ENCODE measurements at regions of chr1 and their contacts with region 1.

Region 1: DNA sequence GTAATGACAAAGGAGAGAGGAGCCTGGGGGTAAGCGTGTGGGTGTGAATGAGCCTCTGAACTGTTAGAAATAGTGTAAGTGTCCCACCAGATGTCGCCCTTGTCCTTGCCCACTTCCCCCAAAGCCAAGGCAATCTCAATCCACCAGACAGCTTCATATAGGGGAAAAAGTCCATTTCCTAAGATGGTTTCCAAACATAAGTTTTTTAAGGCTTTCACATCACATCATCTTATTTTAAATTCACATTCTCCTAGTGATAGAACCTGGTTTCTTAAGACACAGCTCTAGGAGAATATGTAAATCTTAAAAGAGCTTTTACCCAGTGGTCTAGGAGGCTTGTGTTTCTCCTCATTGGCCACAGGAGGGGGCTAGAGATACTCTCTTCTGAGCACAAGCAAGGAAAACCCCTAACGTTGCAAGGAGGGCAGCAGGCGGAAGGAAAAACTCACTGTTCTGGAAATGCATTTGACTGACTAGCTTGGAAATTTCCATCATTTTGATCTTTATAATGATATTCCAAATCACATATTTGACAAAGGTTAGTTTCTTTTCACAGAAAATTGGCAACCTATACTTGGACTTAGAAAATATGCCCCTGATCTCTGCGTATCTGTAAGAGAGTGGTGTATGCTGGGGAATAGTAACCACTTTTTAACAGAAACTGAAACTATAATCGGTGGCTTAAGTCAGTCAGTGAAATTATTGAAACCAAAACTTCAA is 51.9 kb upstream of the LPAR3 start:
- DNase-seq: peak; percentile 90
- H3K4me3 ChIP-seq: peak overlapping the region; percentile 37
- H3K27ac ChIP-seq: no peak overlapping the region
- H3K27me3 ChIP-seq: peaks cover 8% of the 10 kb centered on the region
- CTCF ChIP-seq: peak; percentile 77

Region 2: DNA sequence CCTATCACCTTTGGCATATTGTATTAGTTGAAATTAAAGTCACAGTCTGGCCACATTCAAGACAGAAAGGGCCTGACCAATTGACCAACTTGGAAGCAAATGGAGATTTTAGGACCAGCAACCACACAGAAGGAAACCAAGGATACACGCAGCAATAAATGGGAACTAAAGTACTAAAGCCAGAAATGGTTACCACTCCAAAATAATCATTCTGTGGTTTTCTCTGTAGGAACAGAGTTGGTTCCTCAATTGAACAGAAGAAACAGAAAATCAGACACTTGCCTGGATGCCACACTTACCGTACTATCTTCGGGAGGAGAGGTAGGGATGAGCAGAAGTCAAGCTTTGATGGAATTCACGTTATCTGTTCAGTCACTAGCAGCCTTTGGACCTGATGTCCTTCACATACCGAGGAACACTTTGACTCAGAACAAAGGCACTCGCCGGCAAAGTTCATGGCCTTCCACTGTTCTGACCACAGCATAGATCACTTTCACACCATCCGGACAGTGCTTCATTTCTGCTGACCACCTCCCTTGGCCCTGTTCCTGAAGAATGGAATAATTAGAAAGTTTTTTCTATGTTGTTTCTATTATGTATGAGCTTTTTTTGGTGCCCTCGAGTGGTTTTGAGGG is 148.8 kb before region 1 on chr1:
- CTCF ChIA-PET with region 1: no interaction called
- POLR2A ChIA-PET with region 1: no interaction called
- DNase-seq: no peak
- H3K4me3 ChIP-seq: no peak overlapping the region
- H3K27ac ChIP-seq: no peak overlapping the region
- H3K27me3 ChIP-seq: peaks cover 7% of the 10 kb centered on the region
- CTCF ChIP-seq: no peak

Region 3: GRCh38 chr1:84892705-84893618 is 52.0 kb before region 1 on chr1 and contains the start of gene LPAR3:
- CTCF ChIA-PET with region 1: no interaction called
- POLR2A ChIA-PET with region 1: no interaction called
- DNase-seq: no peak
- H3K4me3 ChIP-seq: peak within 1 kb of the TSS; percentile 56
- H3K27ac ChIP-seq: no peak within 1 kb of the TSS
- H3K27me3 ChIP-seq: peaks cover 14% of the 10 kb centered on the region
- CTCF ChIP-seq: no peak
- polyA plus RNA-seq, gene LPAR3: 3.5 and 4.8 TPM in 2 replicates

Region 4: DNA sequence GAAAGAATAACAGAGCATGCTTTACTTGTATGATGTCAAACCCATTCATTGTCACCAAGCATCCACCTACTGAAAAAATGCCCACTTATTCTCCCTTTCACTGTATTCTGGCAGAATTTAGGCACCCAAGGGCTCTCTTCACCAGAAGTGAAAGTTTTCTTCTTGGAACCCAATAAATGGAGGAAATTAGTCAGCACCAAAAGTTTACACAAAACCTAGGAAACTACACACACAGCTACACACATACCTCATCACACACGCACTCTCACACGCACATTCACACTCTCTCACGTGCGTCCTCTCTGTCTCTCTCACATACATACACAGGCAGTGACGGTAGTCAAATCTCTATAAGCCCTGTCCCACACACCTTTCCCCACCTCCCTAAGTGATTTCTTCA is 14.4 kb after region 1 on chr1:
- CTCF ChIA-PET with region 1: interaction called, 67 read pairs
- POLR2A ChIA-PET with region 1: no interaction called
- DNase-seq: no peak
- H3K4me3 ChIP-seq: no peak overlapping the region
- H3K27ac ChIP-seq: no peak overlapping the region
- H3K27me3 ChIP-seq: no peaks in the 10 kb centered on the region
- CTCF ChIP-seq: no peak

Region 5: GRCh38 chr1:85019994-85020393 is 75.1 kb after region 1 on chr1:
- CTCF ChIA-PET with region 1: interaction called, 52 read pairs
- POLR2A ChIA-PET with region 1: no interaction called
- DNase-seq: no peak
- H3K4me3 ChIP-seq: no peak overlapping the region
- H3K27ac ChIP-seq: no peak overlapping the region
- H3K27me3 ChIP-seq: no peaks in the 10 kb centered on the region
- CTCF ChIP-seq: no peak

Region 6: GRCh38 chr1:85033221-85033620 is 88.3 kb after region 1 on chr1:
- CTCF ChIA-PET with region 1: interaction called, 91 read pairs
- POLR2A ChIA-PET with region 1: interaction called, 6 read pairs
- DNase-seq: no peak
- H3K4me3 ChIP-seq: no peak overlapping the region
- H3K27ac ChIP-seq: no peak overlapping the region
- H3K27me3 ChIP-seq: peaks cover 4% of the 10 kb centered on the region
- CTCF ChIP-seq: no peak

Region 7: GRCh38 chr1:85061711-85062424 is 116.9 kb after region 1 on chr1:
- CTCF ChIA-PET with region 1: interaction called, 15 read pairs
- POLR2A ChIA-PET with region 1: no interaction called
- DNase-seq: peak; percentile 95
- H3K4me3 ChIP-seq: peak overlapping the region; percentile 61
- H3K27ac ChIP-seq: peak overlapping the region; percentile 68
- H3K27me3 ChIP-seq: no peaks in the 10 kb centered on the region
- CTCF ChIP-seq: no peak

Region 8: DNA sequence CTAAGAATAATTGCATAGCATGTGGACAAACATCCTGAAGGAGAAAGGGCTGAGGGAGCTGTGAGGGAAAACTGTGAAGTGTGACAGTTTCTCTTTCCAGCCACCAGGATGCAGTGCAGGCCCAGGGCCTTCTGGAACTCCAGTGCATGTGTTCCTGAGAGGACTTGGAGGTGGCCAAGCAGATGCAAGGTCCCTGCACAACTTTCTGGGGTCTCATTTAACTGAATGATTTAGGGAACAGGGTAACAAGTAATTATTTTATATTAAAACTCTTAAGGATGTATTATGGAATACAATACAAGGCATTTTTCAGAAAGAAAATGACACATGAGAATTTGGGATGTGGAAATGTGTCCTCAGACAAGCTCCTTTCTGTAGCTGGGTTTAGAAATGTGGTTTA is 164.5 kb after region 1 on chr1:
- CTCF ChIA-PET with region 1: interaction called, 76 read pairs
- POLR2A ChIA-PET with region 1: no interaction called
- DNase-seq: peak; percentile 38
- H3K4me3 ChIP-seq: no peak overlapping the region
- H3K27ac ChIP-seq: no peak overlapping the region
- H3K27me3 ChIP-seq: peaks cover 2% of the 10 kb centered on the region
- CTCF ChIP-seq: peak; percentile 94

Region 9: DNA sequence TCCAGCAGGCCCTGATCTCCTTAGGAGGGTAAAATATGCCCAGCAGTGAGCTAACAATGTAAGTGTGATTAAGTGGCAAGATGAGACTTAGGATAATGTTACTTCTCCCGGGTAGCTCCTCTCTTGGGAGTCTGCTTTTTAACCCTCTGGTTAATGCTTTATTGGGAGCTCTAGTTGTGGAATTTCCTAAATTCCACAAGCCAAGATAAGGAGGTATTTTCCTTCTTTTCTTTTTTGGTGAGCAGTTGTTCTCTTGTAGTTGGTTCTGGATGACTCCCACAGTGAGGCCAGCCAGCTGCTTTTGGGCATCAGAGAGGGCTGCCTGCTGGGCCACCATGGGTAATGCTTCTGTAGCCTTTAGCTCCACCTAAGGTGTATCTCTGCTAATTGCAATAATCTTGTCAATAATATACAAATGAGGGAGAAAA is 295.3 kb after region 1 on chr1:
- CTCF ChIA-PET with region 1: interaction called, 15 read pairs
- POLR2A ChIA-PET with region 1: no interaction called
- DNase-seq: no peak
- H3K4me3 ChIP-seq: no peak overlapping the region
- H3K27ac ChIP-seq: no peak overlapping the region
- H3K27me3 ChIP-seq: no peaks in the 10 kb centered on the region
- CTCF ChIP-seq: no peak

Measured in AG04450 (cell line).